Lower lobe of right lung (tissue), 2 donors: ENCODE measurements at regions of chr16 and their contacts with region 1.

Region 1: DNA sequence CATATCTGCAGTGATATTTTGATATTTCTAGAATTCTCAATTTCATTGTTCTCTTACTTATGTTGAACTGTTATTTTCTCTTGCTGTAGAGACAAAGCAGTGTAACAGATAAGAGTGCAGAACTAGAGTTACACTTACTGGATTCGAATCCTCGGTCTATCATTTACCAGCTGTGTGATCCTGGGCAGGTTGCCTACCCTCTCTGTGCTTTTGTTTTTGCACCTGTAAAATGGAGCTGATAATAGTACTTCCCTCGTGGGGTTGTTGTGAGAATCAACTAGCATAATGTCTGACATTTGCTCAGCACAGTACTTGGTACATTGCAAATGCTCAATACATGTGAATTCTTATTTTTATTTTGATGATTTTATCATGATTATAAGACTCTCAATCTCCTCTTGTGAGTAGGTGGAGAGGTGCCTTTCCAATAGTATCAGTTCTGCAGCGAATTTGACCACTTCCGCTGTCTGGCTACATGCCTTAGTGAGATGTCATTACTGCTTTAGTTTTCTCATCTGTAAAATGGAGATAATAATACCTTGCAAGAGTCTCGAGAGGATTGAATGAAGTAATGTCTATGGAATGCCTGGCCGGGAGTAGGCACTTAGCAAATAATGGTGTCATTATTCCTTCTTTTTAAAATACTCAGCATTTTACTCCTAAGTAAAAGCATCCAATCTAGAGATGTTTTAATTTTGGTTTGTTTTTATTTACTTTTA is 312.2 kb upstream of the MAF start:
- DNase-seq: no peak
- ATAC-seq: no peak
- H3K4me3 ChIP-seq: no peak overlapping the region
- H3K27ac ChIP-seq: no peak overlapping the region
- H3K4me1 ChIP-seq: no peaks in the 10 kb centered on the region
- H3K27me3 ChIP-seq: no peaks in the 10 kb centered on the region
- CTCF ChIP-seq: no peak

Region 2: DNA sequence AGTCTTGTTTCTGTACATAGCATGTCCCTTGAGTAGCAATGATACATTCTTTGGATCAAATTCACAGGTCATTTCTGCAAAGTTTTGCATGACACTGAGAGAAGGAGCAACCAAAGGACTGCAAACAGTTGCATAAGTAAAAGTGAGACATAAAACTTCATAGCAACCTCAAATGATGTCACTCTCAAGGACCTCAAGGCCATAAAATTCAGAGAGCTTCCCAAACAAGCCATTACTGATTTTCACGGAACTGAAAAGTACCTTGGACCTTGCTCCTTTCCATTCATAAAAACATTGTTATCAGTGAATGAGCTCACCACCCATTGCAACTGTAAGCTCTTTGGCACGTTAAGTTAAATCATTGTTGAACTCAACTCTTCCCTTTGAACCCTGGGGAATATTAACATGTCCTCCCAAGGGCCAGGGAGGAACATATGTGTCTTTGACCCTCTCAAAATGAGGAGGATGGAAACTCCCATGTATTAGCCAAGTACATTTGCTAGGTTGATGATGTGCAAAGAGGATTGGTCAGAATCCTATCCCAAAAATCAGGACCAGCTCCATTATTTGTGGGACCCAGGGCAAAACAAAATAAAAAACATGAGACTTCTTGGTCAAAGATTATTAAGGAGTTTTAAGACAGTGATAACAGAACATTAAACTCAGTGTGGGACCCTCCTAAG is 353.0 kb after region 1 on chr16:
- intact Hi-C with region 1: no loop called
- DNase-seq: no peak
- ATAC-seq: no peak
- H3K4me3 ChIP-seq: no peak overlapping the region
- H3K27ac ChIP-seq: no peak overlapping the region
- H3K4me1 ChIP-seq: no peaks in the 10 kb centered on the region
- H3K27me3 ChIP-seq: no peaks in the 10 kb centered on the region
- CTCF ChIP-seq: no peak

Region 3: GRCh38 chr16:80330803-80331202 is 418.1 kb after region 1 on chr16:
- intact Hi-C with region 1: loop called (anchors 10 kb)
- DNase-seq: no peak
- ATAC-seq: no peak
- H3K4me3 ChIP-seq: no peak overlapping the region
- H3K27ac ChIP-seq: no peak overlapping the region
- H3K4me1 ChIP-seq: no peaks in the 10 kb centered on the region
- H3K27me3 ChIP-seq: no peaks in the 10 kb centered on the region
- CTCF ChIP-seq: no peak